Motor neuron (in vitro differentiated cells): ENCODE measurements at regions of chr7 and their contacts with region 1.

Region 1: GRCh38 chr7:41731492-41732435 is 28.9 kb upstream of the INHBA start:
- ATAC-seq: no peak
- H3K4me3 ChIP-seq: no peak overlapping the region
- H3K27ac ChIP-seq: no peak overlapping the region
- H3K4me1 ChIP-seq: no peaks in the 10 kb centered on the region

Region 2: GRCh38 chr7:40232242-40232893 is 1499.4 kb before region 1 on chr7:
- in situ Hi-C with region 1: loop called in 2 of 9 experiments (anchors 25 kb)
- ATAC-seq: peak; percentile 24 to 74 (median 59)
- H3K4me3 ChIP-seq: no peak overlapping the region
- H3K27ac ChIP-seq: no peak overlapping the region
- H3K4me1 ChIP-seq: no peaks in the 10 kb centered on the region

Region 3: GRCh38 chr7:40311307-40311706 is 1420.5 kb before region 1 on chr7:
- in situ Hi-C with region 1: loop called in 1 of 9 experiments (anchors 25 kb)
- ATAC-seq: no peak
- H3K4me3 ChIP-seq: no peak overlapping the region
- H3K27ac ChIP-seq: no peak overlapping the region
- H3K4me1 ChIP-seq: no peaks in the 10 kb centered on the region